GM12878 (cell line): ENCODE measurements at regions of chr3 and their contacts with region 1.

Region 1: DNA sequence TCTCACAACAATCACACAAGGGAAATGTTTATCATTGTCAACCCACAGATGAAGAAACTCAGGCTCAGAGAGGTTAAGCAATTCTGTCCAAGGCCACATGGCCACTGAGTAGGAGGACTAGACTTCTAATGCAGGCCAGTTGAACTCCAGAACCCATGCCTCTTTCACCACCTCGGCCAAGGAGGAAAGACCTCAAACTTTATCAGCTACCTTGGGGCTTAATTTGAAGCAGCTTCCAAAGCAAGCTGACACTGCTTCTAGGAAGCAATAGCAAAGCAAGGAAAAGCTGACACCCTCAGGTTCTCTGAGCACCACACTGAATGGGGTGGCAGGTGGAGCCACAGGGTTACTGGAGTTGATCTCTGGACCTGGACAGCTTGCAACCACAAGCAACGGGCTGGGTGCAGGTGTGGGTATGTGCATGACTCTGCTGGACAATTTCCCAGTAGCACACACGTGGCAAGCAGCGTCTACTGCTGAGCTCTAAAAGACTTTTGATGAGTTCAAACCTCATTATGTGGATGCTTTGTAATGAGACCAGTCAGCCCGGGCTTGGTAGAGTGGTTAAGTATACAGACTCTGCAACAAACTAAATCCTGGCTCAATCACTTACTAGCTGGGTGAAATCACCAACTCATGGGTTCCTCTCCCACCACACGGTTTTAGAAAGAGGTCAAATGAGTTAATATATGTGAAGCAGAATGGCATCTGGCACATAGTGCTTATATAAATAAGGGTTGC is 23.1 kb downstream of the CCNL1 start:
- DNase-seq: no peak
- ATAC-seq: no peak; the same call in 1 of the 3 replicates
- H3K4me3 ChIP-seq: no peak overlapping the region
- H3K27ac ChIP-seq: no peak overlapping the region
- H3K4me1 ChIP-seq: peaks cover 10% of the 10 kb centered on the region
- H3K27me3 ChIP-seq: no peaks in the 10 kb centered on the region
- CTCF ChIP-seq: no peak
- EP300 ChIP-seq: no peak
- POLR2A ChIP-seq: no peak
- RAD21 ChIP-seq: no peak

Region 2: DNA sequence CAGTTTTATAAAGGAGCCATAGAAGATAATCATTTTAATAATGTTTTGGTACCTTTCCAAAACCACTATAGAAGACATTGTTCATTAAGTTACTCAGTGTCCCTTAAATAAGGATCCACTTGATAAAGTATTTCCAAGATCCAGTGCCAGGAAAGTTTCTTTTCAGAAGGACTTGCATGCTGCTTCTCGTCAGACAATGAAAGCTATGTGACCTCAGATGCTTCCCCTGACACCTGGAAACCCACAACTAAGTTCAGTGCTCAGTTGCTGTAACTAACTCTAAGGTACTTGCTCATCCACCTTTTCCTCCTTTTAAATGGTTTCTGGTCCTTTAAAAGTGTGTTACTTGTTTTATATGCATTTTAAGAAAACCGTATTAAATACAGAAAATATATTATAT is 589.2 kb before region 1 on chr3:
- CTCF ChIA-PET with region 1: interaction called, 6 read pairs
- POLR2A ChIA-PET with region 1: no interaction called
- RAD21 ChIA-PET with region 1: interaction called, 4 read pairs
- SMC1A ChIA-PET with region 1: interaction called, 4 read pairs
- in situ Hi-C with region 1: loop called (anchors 5 kb)
- intact Hi-C with region 1: loop called (anchors 5 kb)
- DNase-seq: no peak
- ATAC-seq: no peak
- H3K4me3 ChIP-seq: no peak overlapping the region
- H3K27ac ChIP-seq: no peak overlapping the region
- H3K4me1 ChIP-seq: no peaks in the 10 kb centered on the region; the same call in 1 of the 2 replicates
- H3K27me3 ChIP-seq: no peaks in the 10 kb centered on the region
- CTCF ChIP-seq: no peak
- EP300 ChIP-seq: no peak
- POLR2A ChIP-seq: no peak
- RAD21 ChIP-seq: no peak

Region 3: DNA sequence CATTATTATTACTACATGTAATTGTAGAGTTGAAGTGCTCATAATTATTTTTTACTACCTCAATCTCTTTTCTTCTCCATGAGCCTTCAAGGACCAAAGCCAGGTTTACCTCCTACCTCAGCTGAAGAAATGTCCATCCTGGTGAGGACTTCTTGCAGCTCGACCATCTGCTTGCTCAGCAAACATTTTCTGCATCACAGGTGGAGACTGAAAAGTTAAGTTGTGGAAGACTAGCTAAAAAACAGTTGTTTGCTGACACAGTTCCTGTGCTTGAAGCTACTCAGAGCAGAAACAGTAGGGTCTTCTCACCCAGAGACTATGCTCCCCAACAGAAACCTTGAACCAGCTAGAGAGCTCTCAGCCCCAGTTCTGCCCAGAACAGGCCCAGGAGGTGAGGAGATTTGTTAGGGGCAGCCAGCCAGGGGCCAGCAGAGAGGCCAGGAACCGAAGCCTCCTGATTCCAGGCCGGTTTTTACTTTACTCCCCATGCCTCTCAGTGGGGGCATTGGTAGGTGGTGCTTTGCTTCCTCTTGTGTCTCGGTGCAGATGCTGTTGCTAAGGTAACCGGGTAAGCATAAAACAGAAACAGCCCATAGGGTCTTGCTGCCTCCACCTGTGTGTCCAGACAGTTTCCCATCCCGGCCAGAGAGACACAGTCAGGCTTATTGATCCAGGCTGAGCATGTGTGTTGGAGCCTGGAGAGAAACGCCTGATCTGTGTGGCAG is 31.7 kb before region 1 on chr3:
- CTCF ChIA-PET with region 1: interaction called, 939 read pairs
- POLR2A ChIA-PET with region 1: interaction called, 3 read pairs
- RAD21 ChIA-PET with region 1: interaction called, 13 read pairs
- SMC1A ChIA-PET with region 1: interaction called, 28 read pairs
- in situ Hi-C with region 1: no loop called
- intact Hi-C with region 1: no loop called
- DNase-seq: no peak
- ATAC-seq: peak; percentile 71
- H3K4me3 ChIP-seq: no peak overlapping the region
- H3K27ac ChIP-seq: peak overlapping the region; percentile 63; the same call in 1 of the 2 replicates
- H3K4me1 ChIP-seq: peaks cover 31% of the 10 kb centered on the region
- H3K27me3 ChIP-seq: no peaks in the 10 kb centered on the region
- CTCF ChIP-seq: no peak
- EP300 ChIP-seq: no peak
- POLR2A ChIP-seq: no peak
- RAD21 ChIP-seq: no peak

Region 4: DNA sequence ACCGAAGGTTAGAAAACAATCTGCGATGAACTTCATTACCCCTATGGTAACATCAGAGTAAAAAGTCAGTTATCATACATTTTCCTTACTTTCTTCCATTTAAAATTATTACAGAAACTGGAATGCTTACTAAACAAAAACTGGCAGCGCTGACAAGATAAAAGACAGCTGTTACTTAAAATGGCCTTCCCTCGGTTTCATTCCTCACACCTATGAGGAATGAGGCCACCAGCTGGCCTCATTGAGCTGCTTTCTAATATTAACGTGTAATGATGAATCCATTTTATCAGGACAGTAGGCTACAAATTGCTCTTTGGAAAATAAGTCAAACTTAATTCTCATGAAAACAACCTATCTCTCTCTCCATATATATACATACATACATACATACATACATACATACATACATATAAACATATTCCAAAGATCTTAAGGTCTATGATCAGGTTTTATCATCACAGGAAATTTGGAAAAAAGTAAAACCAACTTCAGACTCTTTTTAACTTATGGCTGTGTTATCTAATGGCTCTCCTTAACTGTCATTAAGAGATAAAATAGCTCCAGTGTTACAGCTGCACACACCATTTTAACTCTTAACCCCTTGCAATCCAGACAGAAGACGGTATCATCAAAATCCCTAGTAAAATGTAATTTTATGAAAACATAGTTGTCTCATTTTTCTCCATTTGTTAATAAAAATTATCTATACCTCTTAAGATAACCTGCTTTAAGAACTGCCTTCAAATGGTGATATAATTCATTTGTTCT is 17.9 kb after region 1 on chr3:
- CTCF ChIA-PET with region 1: interaction called, 46 read pairs
- POLR2A ChIA-PET with region 1: no interaction called
- RAD21 ChIA-PET with region 1: interaction called, 4 read pairs
- SMC1A ChIA-PET with region 1: interaction called, 14 read pairs
- in situ Hi-C with region 1: no loop called
- intact Hi-C with region 1: no loop called
- DNase-seq: no peak
- ATAC-seq: no peak
- H3K4me3 ChIP-seq: peak overlapping the region; percentile 72
- H3K27ac ChIP-seq: no peak overlapping the region
- H3K4me1 ChIP-seq: peaks cover 7% of the 10 kb centered on the region; the same call in 1 of the 2 replicates
- H3K27me3 ChIP-seq: no peaks in the 10 kb centered on the region
- CTCF ChIP-seq: no peak; a peak in 1 of 6 replicates
- EP300 ChIP-seq: no peak
- POLR2A ChIP-seq: no peak
- RAD21 ChIP-seq: no peak

Region 5: DNA sequence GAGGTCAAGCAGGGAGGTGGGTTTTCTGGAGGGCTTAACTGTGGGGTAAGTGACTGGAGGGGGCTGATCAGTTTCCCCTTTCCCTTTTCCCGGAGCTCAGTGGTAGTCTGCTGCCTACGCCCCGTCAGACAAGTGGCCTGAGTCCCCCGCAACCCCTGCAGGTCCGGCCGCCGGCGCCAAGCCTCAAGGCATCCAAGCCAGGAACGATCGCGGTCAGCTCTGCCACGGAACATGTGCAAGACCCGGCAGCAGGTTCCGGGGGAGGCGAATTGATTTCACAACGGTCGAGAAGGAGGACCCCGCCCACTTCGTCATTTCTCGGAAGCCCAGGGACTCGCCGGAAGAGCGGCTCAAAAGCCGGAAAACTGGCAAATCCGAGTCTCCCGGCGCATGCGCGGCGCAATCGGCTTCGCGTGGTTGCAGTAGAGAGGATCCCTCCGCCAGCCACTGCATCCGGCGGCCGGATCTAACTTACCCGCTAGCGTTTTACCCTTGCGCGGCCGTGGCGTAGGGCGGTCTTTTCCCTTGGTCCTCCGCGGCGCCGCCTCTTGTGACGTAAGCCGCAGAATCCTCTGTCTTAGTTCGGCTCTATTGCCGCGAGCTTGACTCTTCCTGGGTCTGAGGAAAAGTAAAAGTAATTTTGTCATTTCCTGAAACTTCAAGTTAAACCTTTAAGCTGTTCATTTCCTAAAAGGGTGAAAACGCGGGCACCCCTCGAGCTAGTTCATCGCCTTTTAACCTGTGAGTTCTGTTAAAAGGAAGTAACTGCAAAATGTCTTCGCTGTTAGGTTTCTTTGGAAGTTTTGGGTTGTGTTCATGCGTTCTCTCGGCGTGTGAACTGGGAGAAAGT is 38.1 kb after region 1 on chr3:
- CTCF ChIA-PET with region 1: interaction called, 8 read pairs
- POLR2A ChIA-PET with region 1: no interaction called
- RAD21 ChIA-PET with region 1: interaction called, 3 read pairs
- SMC1A ChIA-PET with region 1: interaction called, 10 read pairs
- in situ Hi-C with region 1: no loop called
- intact Hi-C with region 1: no loop called
- DNase-seq: peak; percentile 97
- ATAC-seq: peak; percentile 94
- H3K4me3 ChIP-seq: peak overlapping the region; percentile 86
- H3K27ac ChIP-seq: peak overlapping the region; percentile 97
- H3K4me1 ChIP-seq: peaks cover 4% of the 10 kb centered on the region; the same call in 1 of the 2 replicates
- H3K27me3 ChIP-seq: no peaks in the 10 kb centered on the region
- CTCF ChIP-seq: no peak
- EP300 ChIP-seq: peak; percentile 42 to 77; a peak in 3 of 4 replicates
- POLR2A ChIP-seq: peak; percentile 97
- RAD21 ChIP-seq: no peak

Region 6: DNA sequence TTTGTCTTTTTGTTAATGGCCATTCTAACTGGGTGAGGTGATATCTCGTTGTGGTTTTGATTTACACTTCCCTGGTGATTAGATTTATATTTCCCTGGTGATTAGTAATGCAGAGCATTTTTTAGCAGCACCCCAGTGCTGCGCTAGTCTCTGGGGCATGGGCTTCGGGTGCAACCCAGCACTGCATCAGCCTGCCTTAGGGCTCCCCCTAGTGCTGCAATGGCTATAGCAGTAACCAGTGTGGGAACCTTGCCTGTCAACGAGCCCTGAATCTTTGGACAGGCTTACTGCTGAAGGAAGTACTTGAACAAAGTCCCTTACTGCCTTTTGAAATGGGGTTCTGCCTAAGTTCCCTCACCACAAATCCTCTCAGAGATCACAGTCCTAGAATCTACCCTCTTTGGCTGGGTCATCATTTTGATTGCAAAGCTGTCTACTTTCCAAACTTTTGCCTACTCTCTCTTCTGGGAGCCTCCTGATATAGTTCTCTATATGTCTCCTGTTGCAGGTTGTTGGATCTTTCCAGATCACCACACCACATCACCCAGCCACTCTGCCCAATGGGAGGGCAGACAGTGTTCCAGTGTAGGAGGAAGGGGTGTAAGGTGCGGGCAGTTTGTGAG is 102.4 kb after region 1 on chr3:
- CTCF ChIA-PET with region 1: interaction called, 3 read pairs
- POLR2A ChIA-PET with region 1: no interaction called
- RAD21 ChIA-PET with region 1: no interaction called
- SMC1A ChIA-PET with region 1: interaction called, 3 read pairs
- in situ Hi-C with region 1: no loop called
- intact Hi-C with region 1: loop called (anchors 5 kb)
- DNase-seq: peak; percentile 8
- ATAC-seq: peak; percentile 100
- H3K4me3 ChIP-seq: no peak overlapping the region
- H3K27ac ChIP-seq: no peak overlapping the region
- H3K4me1 ChIP-seq: no peaks in the 10 kb centered on the region
- H3K27me3 ChIP-seq: no peaks in the 10 kb centered on the region; a peak in 2 of 4 replicates
- CTCF ChIP-seq: peak; percentile 94 to 96 (median 95)
- EP300 ChIP-seq: no peak
- POLR2A ChIP-seq: no peak
- RAD21 ChIP-seq: peak; percentile 89

Region 7: GRCh38 chr3:157393076-157393475 is 256.3 kb after region 1 on chr3:
- CTCF ChIA-PET with region 1: no interaction called
- POLR2A ChIA-PET with region 1: no interaction called
- RAD21 ChIA-PET with region 1: no interaction called
- SMC1A ChIA-PET with region 1: no interaction called
- in situ Hi-C with region 1: no loop called
- intact Hi-C with region 1: no loop called
- DNase-seq: no peak
- ATAC-seq: no peak
- H3K4me3 ChIP-seq: no peak overlapping the region
- H3K27ac ChIP-seq: no peak overlapping the region
- H3K4me1 ChIP-seq: no peaks in the 10 kb centered on the region
- H3K27me3 ChIP-seq: no peaks in the 10 kb centered on the region
- CTCF ChIP-seq: no peak
- EP300 ChIP-seq: no peak
- POLR2A ChIP-seq: no peak
- RAD21 ChIP-seq: no peak